ENCODE measurements at regions of chr17 and their contacts with region 1.

Region 1: GRCh38 chr17:69235338-69235930 is 6.8 kb upstream of the ABCA10 start:
- DNase-seq: peak; percentile 78
- ATAC-seq: peak; percentile 90

Region 2: GRCh38 chr17:68771867-68772515 is 463.4 kb before region 1 on chr17:
- intact Hi-C with region 1: loop called (anchors 5 kb)
- DNase-seq: no peak
- ATAC-seq: peak; percentile 87

Region 3: DNA sequence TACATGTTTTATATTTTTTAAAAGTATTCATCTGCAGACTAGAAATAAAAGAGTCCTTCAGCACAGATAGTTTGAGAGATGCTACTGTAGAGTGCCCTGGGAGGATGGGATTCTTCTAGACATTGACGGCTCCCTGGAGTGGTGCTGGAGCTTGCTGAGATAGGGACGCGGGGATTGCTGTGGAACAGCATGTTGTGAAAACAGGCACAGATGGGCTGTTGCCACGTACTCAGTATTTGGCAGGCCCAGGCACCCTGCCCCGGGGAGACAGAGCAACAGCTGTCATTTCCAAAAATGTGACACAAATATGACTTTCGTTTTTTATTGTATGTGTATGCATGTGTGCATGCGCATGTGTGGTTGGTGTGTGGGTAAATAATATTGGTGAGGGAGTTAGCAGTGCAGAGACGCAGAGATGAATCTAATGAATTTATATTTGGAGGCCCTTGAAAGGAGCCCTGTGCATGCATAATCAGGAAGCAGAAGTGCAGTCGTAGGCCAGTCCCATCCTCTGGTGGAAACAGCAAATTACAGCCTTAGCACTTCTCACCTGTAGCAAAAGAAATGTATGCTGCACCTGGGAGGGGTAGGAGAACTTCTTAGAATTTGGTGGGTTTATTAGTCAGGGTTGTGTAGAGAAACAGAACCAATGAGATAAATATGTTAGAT is 274.1 kb before region 1 on chr17:
- intact Hi-C with region 1: loop called (anchors 10 kb)
- DNase-seq: peak; percentile 76
- ATAC-seq: peak; percentile 95